ENCODE measurements at regions of chr12 and their contacts with region 1.

Region 1: DNA sequence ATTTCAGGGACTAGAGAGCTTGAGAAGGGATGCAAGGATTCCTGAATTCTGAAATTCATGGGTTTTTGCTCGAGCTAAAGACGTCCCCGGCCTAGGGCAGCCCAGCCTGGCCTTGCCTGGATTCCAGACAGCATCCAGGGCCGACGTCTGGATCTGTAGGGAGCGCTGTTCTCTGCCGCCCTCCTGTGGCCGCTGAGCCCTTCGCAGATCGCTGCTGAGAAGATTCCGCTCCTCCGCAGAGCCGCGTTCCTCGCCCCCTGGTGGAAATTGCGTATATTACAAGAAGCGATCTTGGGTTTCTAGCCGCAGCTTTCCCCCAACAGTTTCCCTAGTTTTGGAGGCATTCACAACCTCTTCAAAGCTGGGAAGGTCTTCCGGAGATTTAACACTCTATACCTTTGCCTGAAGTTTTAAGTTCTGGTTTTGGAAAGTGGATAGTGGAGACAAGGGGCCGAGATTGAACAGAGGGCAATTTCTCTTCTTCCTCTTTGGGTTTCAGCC is 5.1 kb downstream of the CISTR start:
- DNase-seq: peak; percentile 91 to 95 (median 93)
- ATAC-seq: peak; percentile 84 to 92 (median 88)
- H3K4me3 ChIP-seq: peak overlapping the region in 2 of 12 donors; percentile 7 to 18
- H3K27ac ChIP-seq: no peak overlapping the region
- H3K4me1 ChIP-seq: peaks cover 0 to 24% (median 14%) of the 10 kb centered on the region in 12 donors
- H3K27me3 ChIP-seq: peaks cover 0 to 71% (median 17%) of the 10 kb centered on the region in 9 donors
- CTCF ChIP-seq: peak; percentile 99 to 100 (median 100)
- POLR2A ChIP-seq: no peak

Region 2: GRCh38 chr12:52634266-52635056 is 1112.2 kb before region 1 on chr12:
- intact Hi-C with region 1: no loop called
- DNase-seq: peak; percentile 77 to 91 (median 79)
- ATAC-seq: peak; percentile 92 to 99 (median 98)
- H3K4me3 ChIP-seq: no peak overlapping the region
- H3K27ac ChIP-seq: no peak overlapping the region
- H3K4me1 ChIP-seq: peaks cover 0 to 3% (median 0%) of the 10 kb centered on the region in 12 donors
- H3K27me3 ChIP-seq: peaks cover 0 to 5% (median 0%) of the 10 kb centered on the region in 9 donors
- CTCF ChIP-seq: no peak
- POLR2A ChIP-seq: no peak

Region 3: GRCh38 chr12:53538196-53538689 is 208.4 kb before region 1 on chr12:
- intact Hi-C with region 1: loop called in 6 of 10 experiments (anchors 2 to 10 kb)
- DNase-seq: no peak
- ATAC-seq: peak in 3 of 4 donors; percentile 31 to 78 (median 63)
- H3K4me3 ChIP-seq: no peak overlapping the region
- H3K27ac ChIP-seq: peak overlapping the region in 3 of 12 donors; percentile 32 to 73 (median 53)
- H3K4me1 ChIP-seq: peaks cover 0 to 25% (median 2%) of the 10 kb centered on the region in 12 donors
- H3K27me3 ChIP-seq: no peaks in the 10 kb centered on the region
- CTCF ChIP-seq: no peak
- POLR2A ChIP-seq: no peak

Region 4: GRCh38 chr12:53645165-53645564 is 101.5 kb before region 1 on chr12:
- intact Hi-C with region 1: no loop called
- DNase-seq: no peak
- ATAC-seq: no peak
- H3K4me3 ChIP-seq: no peak overlapping the region
- H3K27ac ChIP-seq: no peak overlapping the region
- H3K4me1 ChIP-seq: peaks cover 0 to 3% (median 0%) of the 10 kb centered on the region in 12 donors
- H3K27me3 ChIP-seq: no peaks in the 10 kb centered on the region
- CTCF ChIP-seq: no peak
- POLR2A ChIP-seq: no peak

Region 5: GRCh38 chr12:53701518-53702260 is 45.0 kb before region 1 on chr12:
- intact Hi-C with region 1: loop called (anchors 1 to 2 kb)
- DNase-seq: peak; percentile 75 to 87 (median 80)
- ATAC-seq: peak; percentile 86 to 96 (median 92)
- H3K4me3 ChIP-seq: no peak overlapping the region
- H3K27ac ChIP-seq: no peak overlapping the region
- H3K4me1 ChIP-seq: peaks cover 0 to 5% (median 0%) of the 10 kb centered on the region in 12 donors
- H3K27me3 ChIP-seq: peaks cover 9 to 71% (median 21%) of the 10 kb centered on the region in 9 donors
- CTCF ChIP-seq: peak; percentile 81 to 96 (median 92)
- POLR2A ChIP-seq: no peak